Panc1 (cell line): ENCODE measurements at regions of chr12 and their contacts with region 1.

Region 1: DNA sequence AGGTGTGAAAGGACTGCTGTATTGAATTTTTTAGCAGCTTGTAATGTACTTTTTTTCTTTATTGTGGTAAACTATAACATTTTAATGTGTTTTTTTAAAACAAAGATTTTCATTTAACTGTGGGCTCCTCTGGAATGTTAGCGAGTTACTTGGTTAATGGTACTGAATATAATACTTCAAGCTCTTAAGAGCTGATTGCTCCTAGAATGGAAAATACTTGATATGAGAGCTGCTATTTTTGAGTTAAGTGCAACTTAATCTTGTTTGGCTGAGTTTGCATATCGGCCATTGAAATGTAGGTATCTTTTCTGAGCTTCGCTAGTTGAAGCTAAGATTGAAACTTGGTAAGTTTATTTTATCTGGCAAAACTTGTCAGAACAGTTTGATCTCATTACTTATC is 7.4 kb downstream of the TMBIM6 start:
- DNase-seq: no peak
- ATAC-seq: no peak
- H3K4me3 ChIP-seq: no peak overlapping the region
- H3K27ac ChIP-seq: no peak overlapping the region
- H3K4me1 ChIP-seq: peaks cover 23% of the 10 kb centered on the region
- H3K27me3 ChIP-seq: no peaks in the 10 kb centered on the region
- CTCF ChIP-seq: no peak

Region 2: DNA sequence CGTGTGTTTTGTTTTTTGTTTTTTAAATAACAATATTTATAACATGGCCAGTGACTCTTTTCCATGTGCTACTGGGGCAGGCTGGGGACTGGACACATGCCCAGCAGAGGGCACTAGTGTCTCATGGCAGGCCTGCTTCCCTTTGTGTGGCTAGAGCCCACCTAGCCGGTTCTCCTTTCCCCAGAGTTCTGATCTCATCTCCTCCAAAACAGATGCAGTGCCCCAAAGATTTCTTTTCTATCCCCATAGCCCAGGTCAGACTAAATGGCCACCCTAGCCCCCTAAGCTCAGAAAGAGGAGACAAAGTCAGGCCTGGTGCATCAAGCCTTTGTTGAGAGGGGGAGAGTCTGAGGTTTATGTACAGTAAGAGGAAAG is 104.2 kb before region 1 on chr12:
- CTCF ChIA-PET with region 1: interaction called, 3 read pairs
- POLR2A ChIA-PET with region 1: interaction called, 10 read pairs
- in situ Hi-C with region 1: no loop called
- intact Hi-C with region 1: loop called (anchors 10 kb)
- DNase-seq: no peak
- ATAC-seq: peak; percentile 83
- H3K4me3 ChIP-seq: no peak overlapping the region
- H3K27ac ChIP-seq: no peak overlapping the region
- H3K4me1 ChIP-seq: peaks cover 3% of the 10 kb centered on the region; the same call in 1 of the 2 replicates
- H3K27me3 ChIP-seq: no peaks in the 10 kb centered on the region
- CTCF ChIP-seq: peak; percentile 95

Region 3: DNA sequence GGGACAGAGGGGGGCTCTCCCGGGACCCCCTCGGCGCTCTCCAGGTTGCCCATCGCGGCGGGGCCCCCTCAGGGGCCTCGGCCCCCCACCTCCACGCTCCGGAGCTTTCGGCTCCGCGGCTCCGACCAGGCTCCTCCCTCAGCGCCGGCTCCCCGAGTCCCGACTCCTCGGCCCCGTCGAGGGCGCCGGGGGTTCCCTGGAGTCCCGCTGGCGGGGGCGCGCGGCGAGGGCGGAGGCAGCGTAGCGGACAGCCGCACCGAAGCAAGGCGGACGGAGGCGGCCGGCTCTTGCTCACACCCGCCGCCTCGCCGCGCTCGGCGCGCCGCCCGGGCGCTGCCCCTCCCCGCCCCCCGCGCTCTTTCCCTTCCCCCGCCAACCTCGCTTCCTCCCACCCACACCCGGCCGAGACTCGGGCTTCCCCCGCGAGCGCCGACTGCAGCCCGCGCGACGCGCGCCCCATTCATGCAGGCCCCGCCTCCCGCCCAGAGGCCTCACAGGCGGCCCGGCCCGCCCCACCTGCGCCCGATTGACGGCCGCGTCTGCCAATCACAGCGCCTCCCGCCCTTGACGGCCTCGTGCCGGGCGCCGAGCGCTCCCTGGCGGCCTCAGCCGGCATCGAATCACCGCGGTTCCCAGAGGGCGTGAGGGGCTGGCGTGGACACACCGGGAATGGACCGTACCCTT is 41.5 kb before region 1 on chr12 and contains the start of gene FMNL3:
- CTCF ChIA-PET with region 1: no interaction called
- POLR2A ChIA-PET with region 1: no interaction called
- in situ Hi-C with region 1: no loop called
- intact Hi-C with region 1: no loop called
- DNase-seq: peak; percentile 46
- ATAC-seq: peak; percentile 97
- H3K4me3 ChIP-seq: peak within 1 kb of the TSS; percentile 75 to 79
- H3K27ac ChIP-seq: peak within 1 kb of the TSS; percentile 80
- H3K4me1 ChIP-seq: peaks cover 16% of the 10 kb centered on the region
- H3K27me3 ChIP-seq: peaks cover 8% of the 10 kb centered on the region; the same call in 1 of the 2 replicates
- CTCF ChIP-seq: peak; percentile 98
- total RNA-seq, gene FMNL3: 25.7 TPM

Region 4: DNA sequence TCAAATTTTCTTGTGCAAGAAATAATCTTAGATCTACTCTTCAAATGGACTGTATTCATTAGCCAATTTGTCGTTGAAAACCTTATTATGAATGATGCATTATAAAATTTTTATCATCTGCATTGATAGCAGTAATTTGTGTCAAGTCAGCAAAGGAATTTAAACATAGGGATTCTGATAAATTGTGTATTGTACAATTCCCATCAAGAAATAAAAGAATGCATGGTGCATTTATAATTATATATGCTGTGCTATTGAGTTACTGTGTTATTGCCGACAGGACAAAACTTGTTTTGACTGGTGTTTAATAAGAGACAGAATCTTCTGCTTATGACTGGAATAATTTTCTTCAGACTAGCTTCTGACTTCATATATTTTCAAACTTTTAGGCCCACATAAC is 97.2 kb after region 1 on chr12:
- CTCF ChIA-PET with region 1: interaction called, 14 read pairs
- POLR2A ChIA-PET with region 1: no interaction called
- in situ Hi-C with region 1: no loop called
- intact Hi-C with region 1: no loop called
- DNase-seq: no peak
- ATAC-seq: no peak
- H3K4me3 ChIP-seq: no peak overlapping the region
- H3K27ac ChIP-seq: no peak overlapping the region
- H3K4me1 ChIP-seq: peaks cover 16% of the 10 kb centered on the region
- H3K27me3 ChIP-seq: peaks cover 13% of the 10 kb centered on the region
- CTCF ChIP-seq: no peak